GM12878 (cell line): ENCODE measurements at regions of chr2 and their contacts with region 1.

Region 1: DNA sequence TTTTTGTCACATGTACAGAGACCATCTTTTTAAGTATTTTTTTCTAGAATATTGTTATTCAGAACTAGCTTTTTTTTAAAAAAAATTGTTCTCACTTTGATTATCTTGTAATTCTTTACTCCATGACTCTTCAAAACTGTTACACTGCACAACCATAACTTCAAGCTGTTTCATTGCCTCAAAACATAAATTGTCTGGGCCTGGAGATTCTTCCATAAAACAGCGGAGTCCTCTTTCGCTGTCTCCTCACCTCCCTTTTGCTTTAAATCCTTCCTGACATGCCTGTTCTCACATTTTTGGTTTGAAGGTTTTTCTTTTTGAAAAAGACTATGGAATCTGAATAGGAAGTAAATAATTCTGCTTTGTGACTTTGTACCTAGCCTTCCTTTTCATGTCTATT is 126.7 kb downstream of the GALNT3 start:
- DNase-seq: no peak
- ATAC-seq: no peak
- H3K4me3 ChIP-seq: no peak overlapping the region
- H3K27ac ChIP-seq: no peak overlapping the region
- H3K4me1 ChIP-seq: no peaks in the 10 kb centered on the region
- H3K27me3 ChIP-seq: no peaks in the 10 kb centered on the region
- CTCF ChIP-seq: no peak
- EP300 ChIP-seq: no peak
- POLR2A ChIP-seq: no peak
- RAD21 ChIP-seq: no peak

Region 2: GRCh38 chr2:165505514-165505913 is 161.9 kb before region 1 on chr2:
- CTCF ChIA-PET with region 1: no interaction called
- POLR2A ChIA-PET with region 1: no interaction called
- RAD21 ChIA-PET with region 1: no interaction called
- SMC1A ChIA-PET with region 1: no interaction called
- in situ Hi-C with region 1: no loop called
- intact Hi-C with region 1: no loop called
- DNase-seq: no peak
- ATAC-seq: no peak
- H3K4me3 ChIP-seq: no peak overlapping the region
- H3K27ac ChIP-seq: no peak overlapping the region
- H3K4me1 ChIP-seq: no peaks in the 10 kb centered on the region
- H3K27me3 ChIP-seq: no peaks in the 10 kb centered on the region
- CTCF ChIP-seq: no peak
- EP300 ChIP-seq: no peak
- POLR2A ChIP-seq: no peak
- RAD21 ChIP-seq: no peak

Region 3: GRCh38 chr2:165681841-165682240 is 14.5 kb after region 1 on chr2:
- CTCF ChIA-PET with region 1: interaction called, 3 read pairs
- POLR2A ChIA-PET with region 1: interaction called, 5 read pairs
- RAD21 ChIA-PET with region 1: interaction called, 4 read pairs
- SMC1A ChIA-PET with region 1: interaction called, 98 read pairs
- in situ Hi-C with region 1: no loop called
- intact Hi-C with region 1: no loop called
- DNase-seq: no peak
- ATAC-seq: no peak
- H3K4me3 ChIP-seq: no peak overlapping the region
- H3K27ac ChIP-seq: no peak overlapping the region
- H3K4me1 ChIP-seq: no peaks in the 10 kb centered on the region
- H3K27me3 ChIP-seq: no peaks in the 10 kb centered on the region
- CTCF ChIP-seq: no peak
- EP300 ChIP-seq: no peak
- POLR2A ChIP-seq: no peak
- RAD21 ChIP-seq: no peak

Region 4: GRCh38 chr2:165691615-165692014 is 24.2 kb after region 1 on chr2:
- CTCF ChIA-PET with region 1: no interaction called
- POLR2A ChIA-PET with region 1: no interaction called
- RAD21 ChIA-PET with region 1: interaction called, 3 read pairs
- SMC1A ChIA-PET with region 1: interaction called, 10 read pairs
- in situ Hi-C with region 1: no loop called
- intact Hi-C with region 1: no loop called
- DNase-seq: no peak
- ATAC-seq: no peak
- H3K4me3 ChIP-seq: no peak overlapping the region
- H3K27ac ChIP-seq: no peak overlapping the region
- H3K4me1 ChIP-seq: no peaks in the 10 kb centered on the region
- H3K27me3 ChIP-seq: no peaks in the 10 kb centered on the region
- CTCF ChIP-seq: no peak
- EP300 ChIP-seq: no peak
- POLR2A ChIP-seq: no peak
- RAD21 ChIP-seq: no peak